ENCODE measurements at regions of chr16 and their contacts with region 1.

Region 1: GRCh38 chr16:30445408-30446202 is at the start of gene SEPHS2:
- DNase-seq: peak; percentile 99 to 100
- H3K4me3 ChIP-seq: peak within 1 kb of the TSS; percentile 79 to 97
- H3K27ac ChIP-seq: peak within 1 kb of the TSS; percentile 92 to 97
- H3K4me1 ChIP-seq: peaks cover 5 to 16% of the 10 kb centered on the region in 2 donors
- H3K27me3 ChIP-seq: no peaks in the 10 kb centered on the region
- CTCF ChIP-seq: peak; percentile 41 to 59 (median 42)
- total RNA-seq, gene SEPHS2: 22.8 TPM

Region 2: GRCh38 chr16:30429678-30430427 is 15.8 kb before region 1 on chr16 and contains the start of gene DCTPP1:
- intact Hi-C with region 1: loop called (anchors 1 kb)
- DNase-seq: peak; percentile 93 to 97
- H3K4me3 ChIP-seq: peak within 1 kb of the TSS; percentile 64 to 81
- H3K27ac ChIP-seq: peak within 1 kb of the TSS; percentile 67 to 80
- H3K4me1 ChIP-seq: peaks cover 4 to 11% of the 10 kb centered on the region in 2 donors
- H3K27me3 ChIP-seq: no peaks in the 10 kb centered on the region
- CTCF ChIP-seq: peak; percentile 64 to 75 (median 70)
- total RNA-seq, gene DCTPP1: 7.2 TPM